ENCODE measurements at regions of chr5 and their contacts with region 1.

Region 1: DNA sequence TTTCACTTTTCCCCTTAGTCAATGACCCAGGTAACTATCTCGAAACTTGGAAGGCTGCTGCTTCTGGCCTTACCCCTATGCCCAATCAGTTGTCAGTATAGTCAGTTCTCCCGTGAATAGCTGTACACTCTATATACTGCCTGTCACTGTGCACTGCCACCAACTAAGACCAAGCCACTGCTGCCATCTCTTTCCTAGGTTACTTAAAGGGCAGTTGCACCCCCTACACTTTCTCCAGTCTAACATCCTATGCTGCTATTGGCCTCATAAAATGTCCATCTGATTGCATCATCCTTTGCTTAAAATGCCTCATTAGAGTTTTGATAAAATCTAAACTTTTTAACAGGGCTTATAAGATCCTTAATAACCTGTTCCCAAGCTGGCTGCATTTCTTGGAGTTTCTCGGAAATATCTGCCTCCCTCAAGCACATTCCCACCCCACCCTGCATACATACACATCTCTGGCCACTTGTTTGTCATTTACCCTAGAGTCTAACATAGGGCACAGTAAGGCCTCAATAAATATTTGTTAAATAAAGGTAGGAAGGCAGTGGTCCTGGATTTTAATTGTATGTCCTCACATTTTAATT is 32.8 kb upstream of the TNFAIP8 start:
- DNase-seq: no peak
- ATAC-seq: no peak
- H3K4me3 ChIP-seq: peak overlapping the region; percentile 46; the same call in 1 of the 2 replicates
- H3K27ac ChIP-seq: peak overlapping the region; percentile 97
- H3K4me1 ChIP-seq: peaks cover 39% of the 10 kb centered on the region
- H3K27me3 ChIP-seq: no peaks in the 10 kb centered on the region
- CTCF ChIP-seq: no peak

Region 2: GRCh38 chr5:119267958-119268386 is 55.1 kb before region 1 on chr5:
- CTCF ChIA-PET with region 1: no interaction called
- POLR2A ChIA-PET with region 1: interaction called, 4 read pairs
- intact Hi-C with region 1: loop called (anchors 2 kb)
- DNase-seq: peak; percentile 90
- ATAC-seq: peak; percentile 77
- H3K4me3 ChIP-seq: peak overlapping the region; percentile 93
- H3K27ac ChIP-seq: peak overlapping the region; percentile 75
- H3K4me1 ChIP-seq: peaks cover 33% of the 10 kb centered on the region
- H3K27me3 ChIP-seq: no peaks in the 10 kb centered on the region
- CTCF ChIP-seq: no peak

Region 3: DNA sequence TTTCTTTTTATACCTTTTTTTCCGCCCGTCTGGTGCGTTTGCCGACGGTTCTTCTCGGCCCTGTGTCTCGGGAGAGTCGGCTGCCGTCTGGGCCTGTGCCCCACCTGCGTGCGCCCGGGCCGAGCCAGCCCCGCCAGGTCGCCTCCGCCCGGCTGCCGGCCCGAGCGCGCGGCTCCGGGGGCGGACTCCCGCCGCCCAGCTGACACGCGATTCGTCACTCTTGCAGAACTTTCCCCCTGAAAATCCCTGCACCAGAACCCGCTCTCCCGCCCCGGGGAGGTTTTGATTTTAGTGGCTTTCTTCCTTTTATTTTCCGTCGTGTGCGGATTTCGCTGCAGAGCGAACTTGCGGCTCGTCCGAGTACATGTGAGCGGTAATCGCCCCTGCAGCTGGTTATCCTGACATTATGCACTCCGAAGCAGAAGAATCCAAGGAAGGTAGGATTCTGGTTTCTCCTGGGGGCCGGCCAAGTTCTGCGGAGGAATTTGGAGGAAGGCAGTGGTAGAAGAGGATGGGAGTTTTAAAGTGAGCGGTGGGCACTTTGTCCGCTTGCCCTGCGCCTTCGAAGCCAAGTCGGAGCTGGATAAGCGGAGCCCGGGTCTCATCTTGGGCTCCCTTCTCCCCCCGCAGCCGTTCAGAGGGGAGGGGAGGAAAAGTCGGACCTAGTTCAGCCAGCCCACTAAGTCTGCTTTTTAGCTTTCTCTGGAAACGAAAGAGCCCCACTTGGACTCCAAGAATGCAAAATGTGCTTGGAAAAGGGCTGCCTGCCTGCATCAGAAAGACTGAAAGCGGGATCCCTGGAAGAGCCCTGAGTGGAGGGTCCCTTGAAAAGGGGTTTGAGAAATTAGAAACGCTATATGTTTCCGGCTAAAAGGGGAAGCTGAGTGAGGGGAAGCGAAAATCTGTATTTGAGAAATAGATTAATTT is 32.9 kb after region 1 on chr5 and contains the start of gene TNFAIP8:
- CTCF ChIA-PET with region 1: no interaction called
- POLR2A ChIA-PET with region 1: no interaction called
- intact Hi-C with region 1: loop called (anchors 5 kb)
- DNase-seq: peak; percentile 69
- ATAC-seq: peak; percentile 79
- H3K4me3 ChIP-seq: peak within 1 kb of the TSS; percentile 94
- H3K27ac ChIP-seq: peak within 1 kb of the TSS; percentile 94
- H3K4me1 ChIP-seq: peaks cover 56% of the 10 kb centered on the region
- H3K27me3 ChIP-seq: no peaks in the 10 kb centered on the region
- CTCF ChIP-seq: no peak
- total RNA-seq, gene TNFAIP8: 11.8 and 20.0 TPM in 2 replicates